Activated CD4-positive, alpha-beta memory T cell treated with anti-CD3 and anti-CD28 coated beads, Interleukin-2, amount 10 ng/mL, durations not matched to agents 7 days and 5 days (primary cell): ENCODE measurements at regions of chr2 and their contacts with region 1.

Region 1: DNA sequence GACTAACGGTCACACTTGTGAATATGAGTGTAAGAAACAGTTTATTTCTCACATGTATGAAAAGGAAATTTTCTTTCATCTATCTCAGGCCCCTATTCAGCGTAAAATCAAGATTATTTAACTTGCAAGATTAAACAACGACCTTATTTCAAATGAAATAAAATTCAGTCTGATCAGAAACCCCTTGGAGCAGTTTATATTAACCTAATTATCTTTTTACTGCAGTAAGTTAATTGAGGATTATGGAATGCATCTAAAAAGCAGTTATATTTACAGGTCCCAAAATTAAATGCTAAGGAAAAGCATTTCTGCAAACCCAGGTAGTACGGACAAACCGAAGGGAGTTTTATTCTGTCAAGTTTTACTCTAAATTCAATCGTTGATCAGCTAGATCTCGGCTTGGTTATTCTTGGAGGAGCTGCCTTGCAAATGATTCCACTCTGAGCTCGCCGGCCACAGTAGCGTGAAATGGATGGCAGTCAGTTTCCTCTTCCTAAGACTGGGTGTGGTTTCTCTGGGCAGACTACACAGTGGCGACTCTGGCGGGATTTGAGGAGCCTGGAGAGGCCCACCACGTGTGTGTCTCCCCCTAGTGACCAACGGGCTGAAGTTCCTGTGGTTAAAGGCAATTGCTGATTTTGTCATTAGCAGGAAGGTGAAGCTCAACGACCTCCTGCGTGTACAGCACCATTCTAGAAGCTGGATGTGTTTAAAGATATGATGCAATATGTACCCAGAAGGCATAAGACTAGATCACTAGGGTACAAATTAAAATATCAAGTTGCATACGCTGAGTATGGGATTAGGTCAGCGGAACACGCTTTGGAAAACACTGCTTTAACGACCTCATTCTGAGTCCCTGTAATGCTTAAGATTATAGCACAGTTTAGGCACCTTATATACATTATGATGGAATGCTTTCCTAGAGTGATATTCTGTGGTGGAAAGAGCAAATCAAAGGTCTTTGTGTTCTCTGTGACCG is 36.4 kb downstream of the PRKRA start:
- DNase-seq: peak; percentile 89
- H3K4me3 Mint-ChIP-seq: peak overlapping the region; percentile 79
- H3K27ac Mint-ChIP-seq: peak overlapping the region; percentile 86
- H3K4me1 Mint-ChIP-seq: peaks cover 64% of the 10 kb centered on the region
- H3K27me3 Mint-ChIP-seq: peaks cover 3% of the 10 kb centered on the region

Region 2: GRCh38 chr2:178112202-178113152 is 302.1 kb before region 1 on chr2 and contains the start of gene RBM45:
- CTCF ChIA-PET with region 1: interaction called, 49 read pairs
- POLR2A ChIA-PET with region 1: interaction called, 23 read pairs
- DNase-seq: peak; percentile 89
- H3K4me3 Mint-ChIP-seq: peak within 1 kb of the TSS; percentile 80
- H3K27ac Mint-ChIP-seq: peak within 1 kb of the TSS; percentile 89
- H3K4me1 Mint-ChIP-seq: peaks cover 26% of the 10 kb centered on the region
- H3K27me3 Mint-ChIP-seq: no peaks in the 10 kb centered on the region
- total RNA-seq, gene RBM45: 15.3 to 17.8 TPM

Region 3: GRCh38 chr2:178397002-178397605 is 17.5 kb before region 1 on chr2:
- CTCF ChIA-PET with region 1: interaction called, 342 read pairs
- POLR2A ChIA-PET with region 1: interaction called, 155 read pairs
- DNase-seq: no peak
- H3K4me3 Mint-ChIP-seq: no peak overlapping the region
- H3K27ac Mint-ChIP-seq: no peak overlapping the region
- H3K4me1 Mint-ChIP-seq: peaks cover 10% of the 10 kb centered on the region
- H3K27me3 Mint-ChIP-seq: peaks cover 12% of the 10 kb centered on the region

Region 4: DNA sequence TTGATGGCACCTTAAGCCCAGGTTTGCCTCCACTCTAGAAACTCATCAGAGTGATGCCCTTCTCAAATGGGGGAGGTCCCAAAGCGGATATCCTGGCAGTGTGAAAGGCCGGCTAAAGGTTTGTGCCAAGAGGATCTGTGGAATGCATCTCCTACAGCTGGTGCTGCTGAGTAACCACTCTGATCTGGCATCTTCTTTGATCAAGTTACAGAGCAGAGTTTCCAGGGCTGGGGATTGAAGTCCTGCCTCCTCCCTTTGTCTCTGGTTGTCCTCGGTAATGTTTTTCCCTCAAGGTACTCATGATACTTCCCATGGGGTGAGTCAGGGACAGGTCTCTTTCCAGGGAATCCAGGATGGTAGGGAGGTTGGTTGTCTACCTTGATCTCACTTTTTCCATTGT is 11.8 kb after region 1 on chr2:
- CTCF ChIA-PET with region 1: interaction called, 15 read pairs
- POLR2A ChIA-PET with region 1: interaction called, 3 read pairs
- DNase-seq: no peak
- H3K4me3 Mint-ChIP-seq: no peak overlapping the region
- H3K27ac Mint-ChIP-seq: no peak overlapping the region
- H3K4me1 Mint-ChIP-seq: no peaks in the 10 kb centered on the region
- H3K27me3 Mint-ChIP-seq: no peaks in the 10 kb centered on the region

Region 5: GRCh38 chr2:178522950-178523595 is 108.5 kb after region 1 on chr2:
- CTCF ChIA-PET with region 1: interaction called, 12 read pairs
- POLR2A ChIA-PET with region 1: interaction called, 10 read pairs
- DNase-seq: peak; percentile 88
- H3K4me3 Mint-ChIP-seq: peak overlapping the region; percentile 89
- H3K27ac Mint-ChIP-seq: peak overlapping the region; percentile 80
- H3K4me1 Mint-ChIP-seq: peaks cover 57% of the 10 kb centered on the region
- H3K27me3 Mint-ChIP-seq: no peaks in the 10 kb centered on the region